ENCODE measurements at regions of chr12 and their contacts with region 1.

Region 1: DNA sequence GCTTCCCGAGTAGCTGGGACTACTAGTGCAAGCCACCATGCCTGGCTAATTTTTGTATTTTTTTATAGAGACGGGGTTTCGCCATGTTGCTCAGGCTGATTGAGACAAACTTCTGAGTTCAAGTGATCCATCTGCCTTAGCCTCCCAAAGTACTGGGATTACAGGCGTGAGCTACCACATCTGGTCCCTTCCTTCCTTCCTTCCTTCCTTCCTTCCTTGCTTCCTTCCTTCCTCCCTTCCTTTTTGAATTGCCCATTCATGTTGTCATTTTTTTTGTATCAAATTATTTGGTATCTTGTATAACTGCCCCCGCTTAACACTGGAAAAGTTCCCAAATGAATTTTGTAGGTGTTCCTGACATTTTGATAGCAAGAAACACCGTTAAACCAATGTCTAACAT is 11.7 kb downstream of the RAD9B start:
- DNase-seq: no peak
- H3K4me3 ChIP-seq: no peak overlapping the region
- H3K27ac ChIP-seq: no peak overlapping the region
- H3K4me1 ChIP-seq: peaks cover 0 to 7% (median 0%) of the 10 kb centered on the region in 3 donors
- H3K27me3 ChIP-seq: no peaks in the 10 kb centered on the region
- CTCF ChIP-seq: no peak
- POLR2A ChIP-seq: no peak

Region 2: DNA sequence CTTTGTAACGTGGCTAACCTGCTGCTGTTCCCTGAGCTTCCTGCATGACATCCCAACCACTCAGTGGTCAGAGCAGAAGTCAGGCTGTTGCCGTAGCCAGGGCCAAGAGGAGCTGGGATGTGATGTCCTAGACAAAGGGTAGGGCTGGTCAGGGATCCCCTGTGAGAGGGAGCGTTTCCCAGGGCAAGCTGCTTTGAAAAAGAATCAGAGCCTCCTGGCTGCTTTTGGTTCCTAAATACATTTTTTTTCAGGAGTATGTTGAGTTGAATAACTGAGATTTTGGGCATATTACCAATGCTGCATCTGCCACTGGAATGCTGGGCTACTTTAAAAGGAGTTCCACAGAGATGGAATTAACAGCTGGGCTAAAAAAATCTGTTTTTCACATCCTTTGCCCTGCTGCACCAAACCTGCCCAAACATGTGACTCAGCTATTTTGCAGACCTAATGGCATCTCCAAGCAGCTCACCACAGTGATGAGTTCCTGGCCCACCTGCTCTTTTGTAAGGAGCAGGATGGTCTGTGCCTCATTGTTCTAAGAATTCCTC is 490.7 kb before region 1 on chr12:
- intact Hi-C with region 1: no loop called
- DNase-seq: no peak
- H3K4me3 ChIP-seq: no peak overlapping the region
- H3K27ac ChIP-seq: peak overlapping the region in 3 of 4 donors; percentile 21 to 45 (median 41)
- H3K4me1 ChIP-seq: peaks cover 0 to 31% (median 13%) of the 10 kb centered on the region in 3 donors
- H3K27me3 ChIP-seq: no peaks in the 10 kb centered on the region
- CTCF ChIP-seq: no peak
- POLR2A ChIP-seq: no peak

Region 3: DNA sequence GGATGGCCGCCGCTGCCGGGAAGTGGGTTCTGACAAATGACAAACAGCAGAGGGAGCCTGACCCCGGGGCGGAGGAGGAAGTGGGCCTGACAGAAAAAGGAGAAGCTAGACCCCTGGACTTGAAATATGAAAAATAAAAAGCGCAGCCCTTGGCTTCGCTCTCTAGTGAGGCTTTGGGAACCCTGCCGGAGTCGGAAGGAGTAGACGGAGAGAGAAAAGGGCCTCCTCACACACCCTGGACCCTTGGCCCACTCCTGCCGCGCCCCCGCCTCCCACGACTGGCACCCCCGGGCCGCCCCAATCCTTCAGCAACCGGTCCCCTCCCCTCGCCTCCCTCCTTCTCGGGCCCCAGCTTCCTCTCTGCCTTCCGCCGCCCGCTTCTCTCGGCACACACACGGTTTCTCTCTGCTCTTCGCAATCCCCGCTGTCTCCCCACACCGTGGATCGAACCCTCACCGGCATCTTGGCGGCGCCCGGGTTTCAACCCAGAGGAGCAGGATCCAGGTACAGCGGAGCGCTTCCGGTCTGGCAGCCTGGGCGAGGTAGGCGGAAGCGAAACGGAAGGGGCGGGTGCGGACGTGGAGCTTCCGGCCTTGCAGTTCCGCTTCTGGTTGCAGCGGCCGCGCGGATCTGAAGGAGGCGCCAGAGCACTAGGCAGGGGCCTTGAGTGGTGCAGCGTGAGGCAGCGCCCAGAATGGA is 63.9 kb before region 1 on chr12 and contains the start of gene ARPC3:
- intact Hi-C with region 1: loop called (anchors 10 kb)
- DNase-seq: peak; percentile 79
- H3K4me3 ChIP-seq: peak within 1 kb of the TSS; percentile 66 to 90 (median 88)
- H3K27ac ChIP-seq: peak within 1 kb of the TSS; percentile 96 to 97 (median 96)
- H3K4me1 ChIP-seq: peaks cover 0 to 46% (median 28%) of the 10 kb centered on the region in 3 donors
- H3K27me3 ChIP-seq: no peaks in the 10 kb centered on the region
- CTCF ChIP-seq: peak; percentile 82 to 96 (median 92)
- POLR2A ChIP-seq: peak in 2 of 4 donors; percentile 55 to 75
- total RNA-seq, gene ARPC3: 439 to 894 (median 711) TPM

Region 4: GRCh38 chr12:110583137-110584059 is 69.6 kb after region 1 on chr12 and contains the start of gene PPTC7:
- intact Hi-C with region 1: no loop called
- DNase-seq: peak; percentile 82
- H3K4me3 ChIP-seq: peak within 1 kb of the TSS; percentile 65 to 99 (median 88)
- H3K27ac ChIP-seq: peak within 1 kb of the TSS; percentile 94 to 99 (median 96)
- H3K4me1 ChIP-seq: peaks cover 39 to 68% (median 52%) of the 10 kb centered on the region in 3 donors
- H3K27me3 ChIP-seq: no peaks in the 10 kb centered on the region
- CTCF ChIP-seq: no peak
- POLR2A ChIP-seq: peak in 3 of 4 donors; percentile 71 to 94 (median 84)
- total RNA-seq, gene PPTC7: 14.8 to 30.5 (median 19.2) TPM